Activated CD4-positive, alpha-beta T cell treated with anti-CD3 and anti-CD28 coated beads, Interleukin-2, amount 10 ng/mL, durations not matched to agents 24 days and 14 days (primary cell): ENCODE measurements at regions of chr7 and their contacts with region 1.

Region 1: GRCh38 chr7:36784991-36785940 is 61.0 kb upstream of the AOAH start:
- DNase-seq: peak; percentile 88
- H3K4me3 Mint-ChIP-seq: peak overlapping the region; percentile 68
- H3K27ac Mint-ChIP-seq: peak overlapping the region; percentile 88
- H3K4me1 Mint-ChIP-seq: peaks cover 72% of the 10 kb centered on the region
- H3K27me3 Mint-ChIP-seq: no peaks in the 10 kb centered on the region

Region 2: DNA sequence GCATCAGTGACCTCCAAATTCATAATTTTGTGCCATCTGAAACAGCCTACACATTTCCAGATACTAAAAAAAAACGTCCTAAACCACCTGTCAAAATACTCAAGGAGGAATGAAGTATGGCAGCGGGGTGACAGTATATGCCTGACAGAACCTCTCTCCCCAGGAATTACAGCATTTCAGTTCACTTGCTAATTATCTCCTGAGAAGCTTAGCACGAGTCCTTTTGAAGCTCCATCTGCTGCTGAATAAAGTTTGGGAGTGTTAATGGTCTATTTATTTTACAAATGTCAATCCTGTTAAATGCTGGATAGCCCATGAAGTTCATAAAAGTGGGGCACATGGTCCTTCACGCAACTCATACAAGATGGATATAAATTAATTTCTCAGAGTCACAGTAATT is 425.0 kb before region 1 on chr7:
- intact Hi-C with region 1: no loop called
- DNase-seq: no peak
- H3K4me3 Mint-ChIP-seq: no peak overlapping the region
- H3K27ac Mint-ChIP-seq: no peak overlapping the region
- H3K4me1 Mint-ChIP-seq: no peaks in the 10 kb centered on the region
- H3K27me3 Mint-ChIP-seq: peaks cover 20% of the 10 kb centered on the region

Region 3: DNA sequence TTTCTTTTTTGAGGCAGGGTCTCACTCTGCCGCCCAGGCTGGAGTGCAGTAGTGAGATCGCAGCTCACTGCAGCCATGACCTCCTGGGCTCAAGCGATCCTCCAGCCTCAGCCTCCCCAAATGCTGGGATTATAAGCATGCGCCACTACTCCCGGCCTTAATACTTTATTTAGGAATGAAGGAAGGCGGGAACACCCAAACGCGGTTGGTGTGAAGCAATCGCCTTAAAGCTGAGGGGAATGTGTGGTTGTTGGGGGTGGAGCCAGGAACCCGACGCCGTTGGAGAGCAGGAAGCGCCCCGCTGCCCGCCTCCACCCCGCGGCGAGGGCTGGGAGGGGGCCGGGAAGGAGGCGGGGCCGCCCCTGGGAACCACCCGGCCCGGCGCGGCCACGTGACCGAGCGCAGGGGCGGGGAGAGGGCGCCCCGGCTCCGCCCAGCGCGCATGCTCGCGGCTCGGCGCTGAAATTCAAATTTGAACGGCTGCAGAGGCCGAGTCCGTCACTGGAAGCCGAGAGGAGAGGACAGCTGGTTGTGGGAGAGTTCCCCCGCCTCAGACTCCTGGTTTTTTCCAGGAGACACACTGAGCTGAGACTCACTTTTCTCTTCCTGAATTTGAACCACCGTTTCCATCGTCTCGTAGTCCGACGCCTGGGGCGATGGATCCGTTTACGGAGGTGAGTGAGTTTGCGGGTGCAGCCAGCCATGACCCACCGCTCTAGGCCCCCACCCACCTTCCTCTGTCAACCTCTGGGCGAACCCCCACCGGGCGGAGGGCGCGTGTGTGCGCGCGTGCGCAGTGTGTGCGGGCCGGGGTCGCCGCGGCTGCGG is 395.7 kb before region 1 on chr7 and contains the start of gene ANLN:
- intact Hi-C with region 1: loop called (anchors 5 kb)
- DNase-seq: peak; percentile 97
- H3K4me3 Mint-ChIP-seq: peak within 1 kb of the TSS; percentile 92
- H3K27ac Mint-ChIP-seq: peak within 1 kb of the TSS; percentile 85
- H3K4me1 Mint-ChIP-seq: peaks cover 33% of the 10 kb centered on the region
- H3K27me3 Mint-ChIP-seq: peaks cover 12% of the 10 kb centered on the region
- total RNA-seq, gene ANLN: 35.6 and 35.9 TPM in 2 replicates

Region 4: GRCh38 chr7:36487756-36488336 is 297.4 kb before region 1 on chr7:
- intact Hi-C with region 1: loop called (anchors 10 kb)
- DNase-seq: peak; percentile 85
- H3K4me3 Mint-ChIP-seq: no peak overlapping the region
- H3K27ac Mint-ChIP-seq: no peak overlapping the region
- H3K4me1 Mint-ChIP-seq: peaks cover 4% of the 10 kb centered on the region
- H3K27me3 Mint-ChIP-seq: peaks cover 12% of the 10 kb centered on the region

Region 5: GRCh38 chr7:36686499-36686898 is 98.8 kb before region 1 on chr7:
- intact Hi-C with region 1: loop called (anchors 5 kb)
- DNase-seq: peak; percentile 73
- H3K4me3 Mint-ChIP-seq: peak overlapping the region; percentile 41
- H3K27ac Mint-ChIP-seq: peak overlapping the region; percentile 91
- H3K4me1 Mint-ChIP-seq: peaks cover 67% of the 10 kb centered on the region
- H3K27me3 Mint-ChIP-seq: no peaks in the 10 kb centered on the region

Region 6: DNA sequence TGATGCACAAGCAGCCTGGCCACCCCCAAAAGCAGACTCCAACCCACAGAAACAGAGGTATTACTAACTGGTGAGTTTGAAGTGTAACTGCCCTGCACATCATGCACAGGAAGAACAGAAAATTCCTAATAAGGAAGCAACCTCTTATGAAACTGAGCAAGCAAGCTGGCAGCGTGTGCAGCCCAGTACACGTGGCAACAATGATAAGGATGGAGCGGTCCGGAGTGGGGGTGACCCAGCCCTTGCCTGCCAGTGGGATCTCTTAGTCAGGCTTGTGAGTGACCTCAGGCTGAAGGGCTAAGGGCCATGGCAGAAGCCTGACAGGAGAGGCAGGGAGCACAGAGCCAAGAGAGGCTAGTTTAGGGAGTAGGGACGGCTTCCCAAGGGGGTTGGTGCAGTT is 38.9 kb before region 1 on chr7:
- intact Hi-C with region 1: loop called (anchors 5 kb)
- DNase-seq: no peak
- H3K4me3 Mint-ChIP-seq: no peak overlapping the region
- H3K27ac Mint-ChIP-seq: no peak overlapping the region
- H3K4me1 Mint-ChIP-seq: peaks cover 30% of the 10 kb centered on the region
- H3K27me3 Mint-ChIP-seq: peaks cover 2% of the 10 kb centered on the region

Region 7: DNA sequence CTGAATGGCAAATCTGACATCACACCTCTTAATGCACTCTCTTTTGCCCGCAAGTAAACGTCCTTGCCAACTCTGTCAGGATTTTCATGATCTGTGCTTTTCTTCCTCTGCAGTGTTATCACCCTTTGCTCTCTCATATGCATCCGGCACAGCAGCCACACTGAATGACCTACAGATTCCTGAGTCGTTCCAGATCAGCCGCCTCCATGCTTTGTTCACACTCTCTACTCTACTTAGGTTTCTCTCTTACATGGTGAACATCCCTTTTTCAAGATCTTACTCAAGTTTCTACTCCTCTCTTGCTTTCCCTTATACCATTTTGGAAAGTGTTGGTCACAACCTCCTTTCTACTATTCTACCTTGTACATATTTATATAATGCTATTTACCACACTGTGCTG is 66.8 kb after region 1 on chr7:
- intact Hi-C with region 1: loop called (anchors 2 kb)
- DNase-seq: no peak
- H3K4me3 Mint-ChIP-seq: peak overlapping the region; percentile 36
- H3K27ac Mint-ChIP-seq: peak overlapping the region; percentile 79
- H3K4me1 Mint-ChIP-seq: peaks cover 24% of the 10 kb centered on the region
- H3K27me3 Mint-ChIP-seq: no peaks in the 10 kb centered on the region

Region 8: DNA sequence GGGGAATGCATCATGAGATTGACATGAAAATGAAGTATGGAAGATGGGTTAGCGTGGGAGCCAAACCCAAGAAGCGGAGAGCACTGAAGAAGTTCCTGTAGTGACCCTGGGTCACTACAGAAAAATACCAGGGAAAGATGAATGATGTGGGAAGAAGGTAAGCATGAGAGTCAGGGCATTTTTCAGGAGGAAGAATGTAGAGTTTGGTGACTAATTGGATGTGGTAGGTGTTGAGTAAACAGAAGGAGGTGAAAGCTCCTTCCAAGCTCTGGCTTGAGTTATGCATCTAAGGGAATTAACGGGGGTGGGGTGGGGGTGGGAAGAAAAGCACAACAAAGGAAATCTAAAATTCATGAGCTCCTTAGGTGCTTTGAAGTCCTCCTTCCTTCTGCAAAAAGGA is 177.1 kb after region 1 on chr7:
- intact Hi-C with region 1: loop called (anchors 5 kb)
- DNase-seq: no peak
- H3K4me3 Mint-ChIP-seq: no peak overlapping the region
- H3K27ac Mint-ChIP-seq: peak overlapping the region; percentile 64
- H3K4me1 Mint-ChIP-seq: peaks cover 37% of the 10 kb centered on the region
- H3K27me3 Mint-ChIP-seq: no peaks in the 10 kb centered on the region